Heart left ventricle (tissue), 16 donors: ENCODE measurements at regions of chr9 and their contacts with region 1.

Region 1: DNA sequence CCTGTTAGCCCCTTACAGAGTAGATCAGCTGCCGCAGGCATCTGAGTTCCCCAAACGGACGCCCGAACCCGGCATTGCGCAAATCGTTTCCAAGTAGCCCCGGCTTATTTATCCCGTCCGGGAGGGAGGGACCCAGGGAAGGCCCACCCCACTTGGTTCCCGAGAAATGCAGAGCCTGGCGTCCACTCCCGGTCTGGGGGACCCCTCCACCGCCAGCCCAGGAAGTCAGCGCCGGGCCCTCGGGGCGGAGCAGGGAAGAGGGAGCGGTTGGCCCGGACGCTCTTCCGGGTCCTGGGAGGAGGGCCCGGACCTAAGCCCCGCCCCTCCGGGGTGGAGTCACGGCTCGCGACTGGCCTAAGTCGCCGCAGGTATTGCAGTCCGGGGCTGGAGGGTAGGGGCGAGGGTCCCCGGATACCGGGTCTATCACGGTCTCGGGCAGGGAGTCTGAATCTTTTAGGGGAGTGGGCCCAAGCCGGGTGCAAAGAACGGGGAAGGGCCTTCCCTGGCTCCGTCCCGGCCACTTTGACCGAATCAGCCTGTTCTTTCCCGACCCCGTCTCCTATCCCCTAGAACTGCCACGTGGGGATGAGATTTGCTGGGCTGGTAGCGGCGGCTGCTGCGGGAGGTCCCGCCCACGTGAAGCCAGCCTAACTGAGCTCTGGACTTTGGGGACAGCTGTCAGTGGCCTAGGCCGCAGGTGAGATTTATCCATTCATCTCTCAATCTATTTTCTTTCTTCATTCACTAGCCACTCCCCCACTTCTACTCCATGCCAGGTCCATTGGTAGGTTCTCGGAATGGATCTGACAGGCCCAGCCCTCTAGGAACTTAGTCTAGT is at the start of gene RABEPK:
- DNase-seq: peak; percentile 93 to 95 (median 95)
- ATAC-seq: peak; percentile 99 to 100 (median 100)
- H3K4me3 ChIP-seq: peak within 1 kb of the TSS; percentile 52 to 97 (median 77)
- H3K27ac ChIP-seq: peak within 1 kb of the TSS; percentile 7 to 96 (median 88)
- H3K4me1 ChIP-seq: peaks cover 0 to 15% (median 3%) of the 10 kb centered on the region in 12 donors
- H3K27me3 ChIP-seq: no peaks in the 10 kb centered on the region
- CTCF ChIP-seq: no peak
- POLR2A ChIP-seq: peak; percentile 34 to 92
- total RNA-seq, gene RABEPK: 7.4 to 12.2 (median 10.6) TPM

Region 2: GRCh38 chr9:124868511-124869465 is 331.6 kb before region 1 on chr9:
- intact Hi-C with region 1: loop called in 2 of 10 experiments (anchors 5 to 10 kb)
- DNase-seq: peak; percentile 90 to 94 (median 91)
- ATAC-seq: peak; percentile 73 to 93 (median 90)
- H3K4me3 ChIP-seq: peak overlapping the region; percentile 69 to 99 (median 88)
- H3K27ac ChIP-seq: peak overlapping the region; percentile 70 to 98 (median 94)
- H3K4me1 ChIP-seq: peaks cover 17 to 53% (median 47%) of the 10 kb centered on the region in 12 donors
- H3K27me3 ChIP-seq: no peaks in the 10 kb centered on the region
- CTCF ChIP-seq: peak in 2 of 12 donors; percentile 3 to 10
- POLR2A ChIP-seq: peak; percentile 81 to 91

Region 3: GRCh38 chr9:125003332-125003731 is 197.1 kb before region 1 on chr9:
- intact Hi-C with region 1: no loop called
- DNase-seq: no peak
- ATAC-seq: no peak
- H3K4me3 ChIP-seq: no peak overlapping the region
- H3K27ac ChIP-seq: no peak overlapping the region
- H3K4me1 ChIP-seq: no peaks in the 10 kb centered on the region
- H3K27me3 ChIP-seq: no peaks in the 10 kb centered on the region
- CTCF ChIP-seq: no peak
- POLR2A ChIP-seq: no peak

Region 4: DNA sequence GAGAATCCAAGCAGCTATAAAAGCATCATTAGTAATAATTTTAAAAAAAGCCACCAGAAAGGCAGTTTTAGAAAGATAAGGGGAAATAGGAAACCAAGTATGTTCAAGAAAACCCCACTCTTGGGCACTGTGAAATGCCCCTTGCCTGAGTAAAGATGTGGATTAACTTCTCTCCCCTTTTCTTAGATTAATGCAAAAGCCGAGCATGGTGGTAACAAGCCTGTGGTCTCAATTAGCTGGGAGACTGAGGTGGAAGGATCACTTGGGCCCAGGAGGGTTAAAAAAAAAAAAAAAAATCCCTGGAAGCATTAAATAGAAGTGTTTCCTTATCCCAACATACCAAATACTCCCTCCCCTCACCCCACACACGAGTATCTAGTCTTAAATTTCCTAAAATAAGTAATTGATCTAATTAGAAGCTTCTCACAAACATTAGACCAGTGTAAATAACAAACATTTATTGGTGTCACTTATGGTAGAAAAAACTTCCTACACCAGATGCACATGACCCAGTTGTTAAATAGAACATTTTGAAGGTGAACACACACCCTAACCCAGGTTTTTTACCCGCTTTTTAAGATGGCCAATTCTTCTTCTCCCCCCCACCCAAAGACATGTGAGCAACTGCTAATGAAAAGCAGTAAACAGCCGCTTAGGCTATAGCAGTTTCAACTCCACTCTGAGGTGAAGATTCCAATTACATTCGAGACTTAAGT is 35.5 kb after region 1 on chr9:
- intact Hi-C with region 1: loop called in 4 of 10 experiments (anchors 1 to 5 kb)
- DNase-seq: no peak
- ATAC-seq: no peak
- H3K4me3 ChIP-seq: peak overlapping the region in 8 of 12 donors; percentile 9 to 94 (median 54)
- H3K27ac ChIP-seq: peak overlapping the region in 3 of 12 donors; percentile 22 to 37 (median 32)
- H3K4me1 ChIP-seq: peaks cover 9 to 59% (median 50%) of the 10 kb centered on the region in 12 donors
- H3K27me3 ChIP-seq: no peaks in the 10 kb centered on the region
- CTCF ChIP-seq: no peak
- POLR2A ChIP-seq: no peak